Left cardiac atrium (tissue), 4 donors: ENCODE measurements at regions of chr11 and their contacts with region 1.

Region 1: GRCh38 chr11:101456812-101457211 is 127.0 kb downstream of the TRPC6 start:
- DNase-seq: no peak
- ATAC-seq: no peak

Region 2: GRCh38 chr11:101848262-101848661 is 391.4 kb after region 1 on chr11:
- intact Hi-C with region 1: loop called (anchors 2 to 5 kb)
- DNase-seq: no peak
- ATAC-seq: no peak

Region 3: DNA sequence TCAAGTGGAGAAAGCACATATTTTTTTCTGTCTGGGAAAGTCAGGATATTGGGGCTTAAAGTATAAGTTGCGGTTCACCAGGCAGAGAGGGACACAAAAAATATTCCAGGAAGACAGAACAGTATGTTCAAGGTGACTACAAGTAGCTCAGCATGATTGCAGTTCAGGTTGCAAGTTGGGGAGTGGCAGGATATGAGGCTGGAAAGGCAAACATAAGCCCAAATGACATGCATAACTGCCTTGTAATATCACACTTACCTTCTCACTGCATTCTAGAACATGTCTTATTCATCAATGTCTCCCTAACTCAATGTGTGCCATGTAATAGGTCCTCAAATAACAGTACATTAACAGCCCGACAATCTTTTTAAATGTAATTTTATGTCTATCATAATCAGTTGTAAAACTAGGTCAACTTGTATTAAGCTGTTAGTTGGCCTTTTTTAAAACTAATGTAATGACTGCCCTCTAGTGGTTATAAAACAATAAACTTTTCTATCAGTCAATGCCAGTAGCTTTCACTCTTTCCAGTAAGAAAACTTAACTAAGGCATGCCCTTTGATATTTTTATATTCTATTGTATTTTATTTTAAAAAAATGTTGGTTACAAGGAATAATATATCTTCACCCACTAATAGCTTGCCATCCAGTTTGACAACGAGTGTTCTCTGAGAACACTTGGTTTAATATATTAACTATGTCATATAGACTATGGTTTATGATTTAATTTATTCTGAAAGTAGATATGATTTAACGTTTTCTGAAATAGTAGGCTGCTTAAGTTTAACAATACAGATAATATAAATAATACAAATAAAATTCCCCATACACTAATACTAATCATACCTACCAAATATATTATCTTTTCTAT is 551.0 kb after region 1 on chr11:
- intact Hi-C with region 1: loop called in 1 of 2 experiments (anchors 10 kb)
- DNase-seq: no peak
- ATAC-seq: peak; percentile 41 to 49